ENCODE measurements at regions of chr2 and their contacts with region 1.

Region 1: DNA sequence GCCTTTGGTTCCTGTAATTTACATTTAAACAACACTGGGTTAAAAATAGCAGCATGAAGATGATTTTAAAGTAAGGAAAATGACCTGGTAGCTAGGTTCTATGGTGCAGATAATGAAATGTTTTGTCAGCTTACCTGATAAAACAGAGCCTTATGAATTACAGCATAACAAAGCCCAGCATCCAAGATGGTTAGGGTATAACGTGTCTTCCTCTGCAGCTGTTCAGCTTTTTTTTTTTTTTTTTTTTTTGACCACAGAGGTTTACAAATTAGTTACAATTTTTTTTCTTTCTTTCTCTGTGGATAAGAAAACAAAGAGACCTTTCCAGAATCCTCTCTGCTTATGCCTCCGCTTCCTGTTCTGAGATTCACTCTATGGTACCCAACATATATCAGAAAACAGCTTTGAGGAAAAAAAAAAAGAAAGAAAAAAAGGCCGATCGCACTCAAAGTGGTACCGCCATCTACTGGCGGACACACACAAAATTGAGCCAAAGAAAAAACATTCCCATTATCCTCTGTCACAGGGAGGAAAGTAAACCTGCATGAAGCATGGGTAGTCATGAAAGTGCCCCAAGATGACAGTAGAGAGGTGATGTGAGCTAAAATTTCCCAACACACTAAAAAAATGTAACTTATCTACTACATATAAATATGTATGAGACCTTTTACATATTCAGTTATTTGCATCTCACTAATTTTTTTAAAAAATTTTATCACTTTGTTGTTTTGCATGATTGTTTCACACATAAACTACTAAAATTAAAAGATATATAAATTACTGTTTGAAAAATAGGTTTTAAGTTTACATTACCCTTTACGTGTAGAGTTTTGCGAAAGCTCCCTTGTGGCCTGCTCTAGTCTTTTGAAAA is at the start of gene SCN3A:
- DNase-seq: no peak
- ATAC-seq: no peak
- total RNA-seq, gene SCN3A: 1.1 TPM

Region 2: DNA sequence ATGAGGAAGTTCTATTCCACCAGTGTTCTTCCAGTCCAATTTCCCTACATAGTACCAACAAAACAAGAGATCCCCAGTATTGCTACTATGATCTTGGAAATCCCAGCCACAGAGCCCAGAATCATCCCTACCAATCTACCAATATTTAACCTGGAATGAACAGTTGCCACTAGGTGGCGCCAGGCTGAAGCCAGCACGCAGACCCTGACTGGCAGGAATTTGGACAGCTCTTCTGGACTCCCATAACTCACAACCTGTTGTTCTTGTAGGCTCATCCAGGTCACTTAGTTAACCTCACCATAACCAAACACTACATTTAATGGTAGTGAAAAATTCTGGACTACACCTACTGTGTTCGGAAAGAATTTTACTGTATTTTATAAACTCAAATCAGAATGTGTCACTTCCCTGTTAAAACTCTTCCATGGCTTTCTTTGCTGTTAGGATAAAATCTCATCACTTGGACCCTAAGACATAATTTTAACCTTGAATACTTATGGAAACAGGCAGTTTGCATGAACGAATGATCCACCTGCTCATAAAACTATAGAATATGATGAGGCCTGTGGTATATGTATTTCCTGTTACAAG is 188.8 kb before region 1 on chr2:
- intact Hi-C with region 1: loop called (anchors 1 to 10 kb)
- DNase-seq: peak; percentile 64
- ATAC-seq: peak; percentile 75 to 81

Region 3: DNA sequence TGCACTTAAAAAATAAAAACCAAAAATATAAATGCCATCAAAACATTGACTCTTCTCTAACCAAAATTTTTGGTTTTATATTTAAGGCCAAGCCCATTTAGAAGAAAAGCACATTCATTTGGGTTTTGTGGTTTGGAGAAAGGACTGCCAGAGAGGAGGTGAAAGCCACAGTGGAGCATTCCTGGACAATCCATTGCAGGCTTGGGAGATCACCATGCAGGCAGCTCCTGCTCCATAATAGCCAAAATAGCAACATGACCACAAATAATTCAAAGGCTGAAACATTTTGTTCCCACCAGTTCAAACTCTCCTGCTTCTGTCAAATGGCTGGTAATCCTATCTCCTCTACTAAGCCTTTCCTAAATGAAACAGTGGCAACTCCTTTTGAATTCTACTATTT is 516.6 kb after region 1 on chr2:
- intact Hi-C with region 1: no loop called
- DNase-seq: no peak
- ATAC-seq: no peak